ENCODE measurements at regions of chr2 and their contacts with region 1.

Region 1: DNA sequence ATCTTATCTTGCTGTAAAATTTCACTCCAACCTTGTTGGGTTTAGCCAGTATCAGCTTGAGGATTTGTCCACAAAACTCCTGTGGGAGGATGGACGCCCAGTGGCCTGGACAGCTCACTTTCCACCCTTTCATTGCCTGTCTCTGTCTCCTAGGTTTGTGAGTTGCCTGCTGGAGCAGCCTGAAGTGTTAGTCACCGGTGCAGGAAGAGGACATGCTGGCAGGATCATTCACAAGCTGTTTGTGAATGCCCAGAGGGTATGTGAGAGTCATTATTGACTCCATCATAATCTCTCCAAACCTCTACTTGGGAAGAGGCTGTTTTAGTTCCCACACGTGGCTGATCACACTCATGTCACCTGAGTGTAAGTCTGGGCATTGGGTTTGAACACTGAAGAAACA is 112.3 kb downstream of the RAB3GAP1 start:
- DNase-seq: no peak

Region 2: DNA sequence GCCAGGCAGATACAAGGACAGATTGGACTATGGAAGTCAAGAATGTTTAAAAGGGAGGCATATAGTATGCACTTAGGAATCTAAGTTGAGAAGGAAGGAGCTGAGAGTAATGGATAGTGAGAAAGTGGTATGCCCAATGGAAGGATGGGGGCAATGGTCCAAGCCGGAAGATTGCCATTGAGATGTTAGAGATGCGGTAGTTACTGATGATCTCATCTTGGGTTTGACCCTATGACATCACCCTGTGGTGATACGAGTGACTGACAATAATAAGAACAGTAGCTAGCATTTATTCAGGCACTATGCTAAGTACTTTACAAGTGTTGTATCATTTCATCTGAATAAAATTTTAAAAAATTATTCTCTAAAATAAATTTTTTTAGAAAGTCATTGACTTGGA is 364.5 kb before region 1 on chr2:
- intact Hi-C with region 1: no loop called
- DNase-seq: no peak

Region 3: DNA sequence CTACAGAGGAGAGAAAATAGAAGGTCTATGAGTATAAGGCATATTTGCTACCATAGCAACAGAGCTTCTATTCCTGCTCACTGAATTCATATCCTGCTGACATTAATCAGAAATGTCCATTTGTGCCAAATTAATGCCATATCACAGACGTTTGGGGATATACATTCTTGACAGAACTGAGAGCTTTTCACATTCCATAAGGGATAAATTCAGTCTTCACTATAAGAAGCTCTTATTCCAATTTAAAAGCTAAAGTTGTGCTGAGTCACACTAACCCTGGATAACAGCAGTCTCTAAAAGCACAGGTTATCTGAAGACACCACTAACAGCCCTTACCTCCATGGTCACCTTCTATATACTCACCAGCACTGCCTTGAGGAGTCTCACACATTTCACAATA is 65.7 kb after region 1 on chr2:
- intact Hi-C with region 1: no loop called
- DNase-seq: no peak

Region 4: GRCh38 chr2:135337071-135337470 is 172.6 kb after region 1 on chr2:
- intact Hi-C with region 1: loop called (anchors 10 kb)
- DNase-seq: no peak

Region 5: GRCh38 chr2:136378712-136379595 is 1214.5 kb after region 1 on chr2:
- intact Hi-C with region 1: no loop called
- DNase-seq: peak in 7 of 10 donors; percentile 30 to 91 (median 61)